Endothelial cell of umbilical vein (primary cell): ENCODE measurements at regions of chr5 and their contacts with region 1.

Region 1: GRCh38 chr5:168987543-168988300 is 313.2 kb downstream of the SLIT3 start:
- DNase-seq: peak; percentile 67
- H3K4me3 ChIP-seq: no peak overlapping the region
- H3K27ac ChIP-seq: no peak overlapping the region
- H3K4me1 ChIP-seq: no peaks in the 10 kb centered on the region
- H3K27me3 ChIP-seq: peaks cover 0 to 6% of the 10 kb centered on the region in 2 experiments
- CTCF ChIP-seq: peak; percentile 67 to 81
- POLR2A ChIP-seq: no peak

Region 2: GRCh38 chr5:168268949-168269943 is 718.5 kb before region 1 on chr5:
- CTCF ChIA-PET with region 1: no interaction called
- POLR2A ChIA-PET with region 1: no interaction called
- dilution Hi-C with region 1: no loop called
- intact Hi-C with region 1: loop called (anchors 1 kb)
- DNase-seq: peak; percentile 87
- H3K4me3 ChIP-seq: peak overlapping the region in 1 of 3 experiments; percentile 3
- H3K27ac ChIP-seq: no peak overlapping the region
- H3K4me1 ChIP-seq: no peaks in the 10 kb centered on the region
- H3K27me3 ChIP-seq: no peaks in the 10 kb centered on the region
- CTCF ChIP-seq: peak; percentile 87 to 88
- POLR2A ChIP-seq: no peak

Region 3: DNA sequence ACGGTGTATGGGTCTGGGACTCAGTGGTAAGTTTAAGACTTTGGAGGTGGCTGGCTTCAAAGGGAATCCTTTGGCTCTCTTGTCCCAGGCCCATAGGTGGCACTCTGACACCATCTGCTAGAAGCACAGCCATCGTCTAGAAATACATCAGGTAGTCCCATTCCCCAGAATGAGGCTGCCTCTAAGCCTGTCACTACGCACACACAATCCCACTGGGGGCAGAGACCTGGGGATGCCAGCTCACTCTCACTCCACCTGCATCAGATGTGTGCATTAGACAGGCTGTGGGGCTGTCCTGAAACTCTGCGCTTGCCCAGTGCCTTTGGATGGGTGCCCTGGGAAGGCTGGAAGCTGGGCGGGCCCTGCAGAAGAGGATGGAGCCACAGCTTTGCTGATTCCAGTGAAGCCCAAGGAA is 281.1 kb before region 1 on chr5:
- CTCF ChIA-PET with region 1: interaction called, 5 read pairs
- POLR2A ChIA-PET with region 1: no interaction called
- dilution Hi-C with region 1: no loop called
- intact Hi-C with region 1: loop called (anchors 1 kb)
- DNase-seq: peak; percentile 9
- H3K4me3 ChIP-seq: no peak overlapping the region
- H3K27ac ChIP-seq: no peak overlapping the region
- H3K4me1 ChIP-seq: no peaks in the 10 kb centered on the region
- H3K27me3 ChIP-seq: no peaks in the 10 kb centered on the region
- CTCF ChIP-seq: peak in 1 of 2 donors; percentile 47
- POLR2A ChIP-seq: no peak

Region 4: GRCh38 chr5:168934169-168934568 is 53.6 kb before region 1 on chr5:
- CTCF ChIA-PET with region 1: no interaction called
- POLR2A ChIA-PET with region 1: no interaction called
- dilution Hi-C with region 1: no loop called
- intact Hi-C with region 1: no loop called
- DNase-seq: no peak
- H3K4me3 ChIP-seq: no peak overlapping the region
- H3K27ac ChIP-seq: no peak overlapping the region
- H3K4me1 ChIP-seq: no peaks in the 10 kb centered on the region
- H3K27me3 ChIP-seq: no peaks in the 10 kb centered on the region
- CTCF ChIP-seq: no peak
- POLR2A ChIP-seq: no peak

Region 5: DNA sequence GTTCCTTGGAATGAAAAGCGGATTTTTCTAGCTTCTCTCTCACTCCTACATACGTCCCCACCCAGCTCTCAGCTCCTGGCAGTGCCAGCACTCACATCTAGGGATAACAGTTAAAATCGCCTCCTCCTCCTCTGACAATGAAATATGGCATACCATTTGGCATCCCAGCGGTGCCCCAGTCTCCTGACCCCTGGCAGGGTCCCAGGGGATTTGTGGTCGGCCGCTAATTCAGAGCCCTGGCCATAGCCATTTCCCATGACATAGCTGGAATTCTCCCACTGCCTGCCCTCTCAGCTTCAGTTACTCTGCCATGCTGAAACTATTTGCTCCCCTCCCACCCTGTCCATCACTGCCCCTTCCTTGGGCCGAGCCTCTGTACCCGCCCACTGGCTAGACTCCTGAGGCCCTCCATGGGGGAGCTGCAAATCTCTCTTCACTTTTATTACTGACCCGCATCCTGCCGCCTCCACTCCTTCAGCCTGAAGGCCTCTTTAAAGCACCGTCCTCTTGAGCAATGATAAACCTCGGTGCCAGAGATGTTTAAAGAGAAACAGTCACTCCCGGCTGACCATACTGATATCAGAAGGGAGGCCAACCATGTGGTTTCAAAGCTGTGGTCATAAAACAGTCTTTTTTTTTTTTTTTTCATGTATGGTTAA is 173.4 kb after region 1 on chr5:
- CTCF ChIA-PET with region 1: no interaction called
- POLR2A ChIA-PET with region 1: no interaction called
- dilution Hi-C with region 1: no loop called
- intact Hi-C with region 1: loop called (anchors 5 kb)
- DNase-seq: peak; percentile 53
- H3K4me3 ChIP-seq: no peak overlapping the region
- H3K27ac ChIP-seq: peak overlapping the region; percentile 51
- H3K4me1 ChIP-seq: peaks cover 35% of the 10 kb centered on the region
- H3K27me3 ChIP-seq: no peaks in the 10 kb centered on the region
- CTCF ChIP-seq: no peak
- POLR2A ChIP-seq: no peak

Region 6: DNA sequence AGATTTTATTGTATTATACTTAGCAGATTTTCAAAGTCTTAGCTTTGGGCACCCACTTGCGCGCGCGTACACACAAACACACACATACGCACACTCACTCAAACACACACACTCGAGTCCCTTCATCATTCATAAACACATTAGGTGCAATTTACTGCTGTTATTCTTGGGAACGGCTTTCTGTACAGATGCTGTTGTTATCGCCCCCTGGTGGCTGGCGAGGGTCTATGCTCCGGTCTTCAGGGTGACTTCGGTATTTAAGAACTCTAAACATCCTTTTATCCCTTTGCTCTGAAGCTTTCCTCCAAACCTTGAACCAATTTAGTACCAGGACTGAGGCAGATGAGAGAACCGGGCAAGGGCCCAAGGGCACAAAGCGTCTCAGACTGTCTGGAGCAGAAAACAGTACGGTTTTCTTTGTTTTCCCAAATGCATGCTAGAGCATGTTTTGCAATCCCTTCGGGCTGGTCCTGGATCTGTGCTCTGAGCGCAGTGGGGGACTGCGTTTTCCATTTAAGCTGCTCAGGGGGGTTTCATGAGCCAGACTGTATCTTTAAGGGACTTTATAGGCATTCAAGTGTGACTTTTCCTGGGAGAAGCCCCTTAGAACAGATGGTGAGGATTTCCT is 314.9 kb after region 1 on chr5:
- CTCF ChIA-PET with region 1: interaction called, 7 read pairs
- POLR2A ChIA-PET with region 1: no interaction called
- dilution Hi-C with region 1: no loop called
- intact Hi-C with region 1: loop called (anchors 1 kb)
- DNase-seq: peak; percentile 85
- H3K4me3 ChIP-seq: no peak overlapping the region
- H3K27ac ChIP-seq: no peak overlapping the region
- H3K4me1 ChIP-seq: peaks cover 4% of the 10 kb centered on the region
- H3K27me3 ChIP-seq: peaks cover 21 to 36% of the 10 kb centered on the region in 2 experiments
- CTCF ChIP-seq: peak; percentile 90 to 93
- POLR2A ChIP-seq: no peak

Region 7: GRCh38 chr5:169548315-169548714 is 560.6 kb after region 1 on chr5:
- CTCF ChIA-PET with region 1: interaction called, 92 read pairs
- POLR2A ChIA-PET with region 1: no interaction called
- dilution Hi-C with region 1: no loop called
- intact Hi-C with region 1: loop called (anchors 1 kb)
- DNase-seq: peak; percentile 57
- H3K4me3 ChIP-seq: no peak overlapping the region
- H3K27ac ChIP-seq: no peak overlapping the region
- H3K4me1 ChIP-seq: no peaks in the 10 kb centered on the region
- H3K27me3 ChIP-seq: peaks cover 2 to 12% of the 10 kb centered on the region in 2 experiments
- CTCF ChIP-seq: peak; percentile 8 to 14
- POLR2A ChIP-seq: no peak